Calu3 (cell line): ENCODE measurements at regions of chr9 and their contacts with region 1.

Region 1: GRCh38 chr9:75890472-75891276 is at the start of gene PCSK5:
- DNase-seq: peak; percentile 88
- H3K4me3 Mint-ChIP-seq: peak within 1 kb of the TSS; percentile 99
- H3K27ac Mint-ChIP-seq: peak within 1 kb of the TSS; percentile 93
- H3K4me1 Mint-ChIP-seq: peaks cover 19% of the 10 kb centered on the region
- H3K27me3 Mint-ChIP-seq: no peaks in the 10 kb centered on the region
- CTCF ChIP-seq: no peak
- total RNA-seq, gene PCSK5: 38.4 and 46.6 TPM in 2 replicates

Region 2: DNA sequence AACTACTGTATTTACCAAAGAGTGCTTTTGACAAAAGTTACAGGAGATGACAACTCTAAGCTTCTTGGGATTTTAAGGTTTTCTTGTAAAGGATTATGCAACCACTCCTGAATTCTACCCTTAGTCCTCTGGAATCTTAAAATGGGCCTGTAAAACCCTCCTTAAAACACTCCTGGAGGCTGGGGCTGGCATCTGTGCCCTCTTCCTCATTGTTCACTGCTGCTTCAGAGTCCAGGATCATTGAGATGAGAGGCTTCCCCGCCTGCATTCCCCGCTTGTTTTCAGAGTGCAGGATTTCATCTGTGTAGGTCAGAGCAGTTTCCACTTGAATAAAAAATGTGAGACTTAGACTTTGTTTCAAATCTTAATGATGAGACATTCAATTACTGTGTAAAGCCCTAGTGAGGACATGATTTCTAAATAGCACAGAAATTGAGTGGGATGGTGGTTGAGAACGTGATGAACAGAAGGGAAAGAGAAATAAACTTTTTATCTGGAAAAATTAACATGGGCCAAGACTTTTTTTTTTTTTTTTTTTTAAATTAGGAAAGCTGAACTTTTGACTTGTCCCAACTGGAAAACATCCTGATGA is 40.2 kb after region 1 on chr9:
- CTCF ChIA-PET with region 1: no interaction called
- intact Hi-C with region 1: loop called (anchors 2 kb)
- DNase-seq: no peak
- H3K4me3 Mint-ChIP-seq: no peak overlapping the region
- H3K27ac Mint-ChIP-seq: peak overlapping the region; percentile 37
- H3K4me1 Mint-ChIP-seq: peaks cover 50% of the 10 kb centered on the region
- H3K27me3 Mint-ChIP-seq: no peaks in the 10 kb centered on the region
- CTCF ChIP-seq: no peak

Region 3: DNA sequence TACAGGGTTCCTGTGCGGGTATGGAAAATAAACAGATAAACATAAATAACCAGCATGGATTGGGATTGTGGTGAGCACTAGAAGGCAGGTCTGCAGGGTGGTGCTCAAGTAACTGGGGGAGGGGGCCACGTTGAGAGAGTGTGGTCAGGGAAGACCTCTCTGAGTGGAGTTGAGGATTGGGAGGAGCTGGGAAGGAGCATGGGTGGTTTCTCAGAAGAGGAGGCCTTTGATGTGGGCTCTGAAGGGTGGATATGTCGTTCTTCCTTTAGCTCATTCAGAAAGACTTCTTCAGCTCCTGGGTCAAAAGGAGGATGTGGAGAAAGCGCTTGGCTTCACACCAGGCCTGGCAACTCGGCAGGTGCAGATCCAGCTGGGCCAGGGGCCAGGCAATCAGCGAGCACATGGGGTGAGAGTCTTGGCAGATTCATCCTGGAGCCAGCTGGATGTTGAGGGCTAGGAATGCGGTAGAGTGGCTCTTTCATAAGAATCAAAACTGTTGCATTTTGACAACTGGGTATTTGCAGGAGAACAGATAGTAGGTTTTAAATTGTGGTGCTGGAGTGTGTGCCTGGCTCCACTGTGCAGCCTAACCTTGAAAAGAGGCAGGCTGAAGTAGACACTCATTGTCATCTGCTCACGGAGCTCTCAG is 71.5 kb after region 1 on chr9:
- CTCF ChIA-PET with region 1: no interaction called
- intact Hi-C with region 1: loop called (anchors 5 kb)
- DNase-seq: no peak
- H3K4me3 Mint-ChIP-seq: no peak overlapping the region
- H3K27ac Mint-ChIP-seq: peak overlapping the region; percentile 64
- H3K4me1 Mint-ChIP-seq: peaks cover 47% of the 10 kb centered on the region
- H3K27me3 Mint-ChIP-seq: no peaks in the 10 kb centered on the region
- CTCF ChIP-seq: no peak

Region 4: DNA sequence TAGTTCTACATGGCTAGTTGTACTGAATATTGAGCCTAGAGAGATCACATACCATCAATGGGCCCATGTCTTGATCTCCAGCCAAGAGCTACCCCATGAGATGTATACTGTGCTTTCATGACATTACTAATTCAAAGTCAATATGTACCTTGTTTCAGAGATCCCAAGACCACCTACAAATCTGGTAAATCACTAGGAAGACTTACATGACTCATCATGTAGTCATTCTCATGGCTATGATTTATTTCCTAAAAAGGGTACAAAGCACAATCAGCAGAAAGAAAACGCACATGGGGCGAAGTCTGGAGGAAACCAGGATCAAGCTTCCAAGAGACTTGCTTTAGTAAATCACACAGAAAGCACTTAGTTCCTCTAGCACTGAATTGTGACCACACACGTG is 102.8 kb after region 1 on chr9:
- CTCF ChIA-PET with region 1: interaction called, 3 read pairs
- intact Hi-C with region 1: loop called (anchors 5 kb)
- DNase-seq: peak; percentile 9
- H3K4me3 Mint-ChIP-seq: peak overlapping the region; percentile 39
- H3K27ac Mint-ChIP-seq: peak overlapping the region; percentile 89
- H3K4me1 Mint-ChIP-seq: peaks cover 58% of the 10 kb centered on the region
- H3K27me3 Mint-ChIP-seq: no peaks in the 10 kb centered on the region
- CTCF ChIP-seq: no peak